ENCODE measurements at regions of chr9 and their contacts with region 1.

Region 1: GRCh38 chr9:120839146-120839545 is 3.6 kb downstream of the PSMD5 start:
- DNase-seq: no peak
- ATAC-seq: no peak

Region 2: GRCh38 chr9:119322184-119322583 is 1517.0 kb before region 1 on chr9:
- intact Hi-C with region 1: no loop called
- DNase-seq: no peak
- ATAC-seq: no peak

Region 3: GRCh38 chr9:120862452-120862851 is 23.3 kb after region 1 on chr9:
- intact Hi-C with region 1: loop called (anchors 1 kb)
- DNase-seq: peak; percentile 47
- ATAC-seq: no peak

Region 4: DNA sequence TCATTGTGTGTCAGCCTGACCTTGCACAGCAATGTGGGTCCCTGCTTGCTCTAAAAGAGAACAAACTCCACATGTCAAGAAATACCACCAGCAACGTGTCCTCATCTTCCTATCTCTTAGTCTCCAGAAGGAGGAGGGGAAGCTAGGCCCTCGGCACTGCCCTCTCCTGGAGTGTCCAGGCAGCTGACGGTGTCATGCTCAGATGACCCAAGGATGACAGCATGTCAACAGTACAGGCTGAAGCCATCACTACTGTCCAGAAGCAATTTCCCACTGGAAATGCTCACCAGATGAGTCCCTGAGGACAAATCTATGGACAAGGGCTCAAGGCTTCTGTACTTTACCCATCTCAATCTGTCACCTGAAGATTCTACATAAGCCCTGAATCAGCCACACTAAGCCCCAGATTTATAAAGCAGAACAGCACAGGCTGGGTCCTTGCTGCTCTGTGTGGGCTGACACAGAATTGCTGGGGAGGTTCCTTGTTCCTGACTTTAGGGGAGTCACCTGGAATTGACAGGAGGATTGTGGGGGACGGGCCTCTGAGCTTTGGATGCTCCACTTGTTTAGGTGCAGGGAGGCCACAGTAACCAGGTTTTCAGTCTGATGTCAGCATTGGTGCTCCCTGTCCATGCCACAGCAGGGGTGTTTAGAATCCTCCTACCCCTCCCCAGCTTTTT is 1022.5 kb after region 1 on chr9:
- intact Hi-C with region 1: no loop called
- DNase-seq: peak; percentile 59
- ATAC-seq: peak; percentile 70